ENCODE measurements at regions of chr13 and their contacts with region 1.

Region 1: DNA sequence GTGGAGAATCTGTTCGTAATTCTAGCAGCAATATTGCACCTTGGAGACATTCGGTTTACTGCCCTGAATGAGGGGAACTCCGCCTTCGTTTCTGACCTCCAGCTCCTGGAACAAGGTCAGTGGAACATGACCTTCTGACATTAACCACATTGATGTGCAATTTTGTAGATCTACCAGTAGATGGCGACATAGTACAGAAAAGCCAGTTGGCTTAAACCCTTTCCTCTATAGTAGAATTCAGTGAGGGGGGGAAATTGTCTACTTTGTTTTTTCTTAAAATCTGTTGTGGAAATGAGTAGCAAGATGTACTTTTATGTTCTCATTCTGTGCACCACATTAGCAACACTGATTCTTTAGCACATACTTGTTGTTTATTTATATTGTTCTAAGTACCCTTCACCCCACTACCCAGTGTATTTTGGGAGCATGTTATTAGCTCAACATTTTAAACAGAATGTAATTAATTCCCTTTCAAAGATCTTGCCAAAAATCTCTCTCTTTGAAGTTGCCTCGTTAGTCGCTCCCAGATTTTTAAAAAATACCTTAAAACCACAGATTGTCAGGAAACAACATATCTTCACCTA is 332.2 kb downstream of the MYO16 start:
- DNase-seq: peak; percentile 61
- ATAC-seq: peak; percentile 61
- H3K4me3 ChIP-seq: no peak overlapping the region
- H3K4me3 Mint-ChIP-seq: no peak overlapping the region
- H3K27ac ChIP-seq: no peak overlapping the region
- H3K27ac Mint-ChIP-seq: no peak overlapping the region
- H3K4me1 ChIP-seq: no peaks in the 10 kb centered on the region
- H3K4me1 Mint-ChIP-seq: no peaks in the 10 kb centered on the region
- H3K27me3 ChIP-seq: no peaks in the 10 kb centered on the region
- H3K27me3 Mint-ChIP-seq: peaks cover 2% of the 10 kb centered on the region
- CTCF ChIP-seq: peak; percentile 96

Region 2: GRCh38 chr13:108690726-108691125 is 270.9 kb before region 1 on chr13:
- CTCF ChIA-PET with region 1: no interaction called
- POLR2A ChIA-PET with region 1: no interaction called
- intact Hi-C with region 1: no loop called
- DNase-seq: no peak
- ATAC-seq: no peak
- H3K4me3 ChIP-seq: no peak overlapping the region
- H3K4me3 Mint-ChIP-seq: no peak overlapping the region
- H3K27ac ChIP-seq: no peak overlapping the region
- H3K27ac Mint-ChIP-seq: no peak overlapping the region
- H3K4me1 ChIP-seq: no peaks in the 10 kb centered on the region
- H3K4me1 Mint-ChIP-seq: no peaks in the 10 kb centered on the region
- H3K27me3 ChIP-seq: no peaks in the 10 kb centered on the region
- H3K27me3 Mint-ChIP-seq: no peaks in the 10 kb centered on the region
- CTCF ChIP-seq: no peak

Region 3: GRCh38 chr13:108769213-108770070 is 192.2 kb before region 1 on chr13:
- CTCF ChIA-PET with region 1: no interaction called
- POLR2A ChIA-PET with region 1: no interaction called
- intact Hi-C with region 1: no loop called
- DNase-seq: no peak
- ATAC-seq: no peak
- H3K4me3 ChIP-seq: no peak overlapping the region
- H3K4me3 Mint-ChIP-seq: no peak overlapping the region
- H3K27ac ChIP-seq: no peak overlapping the region
- H3K27ac Mint-ChIP-seq: no peak overlapping the region
- H3K4me1 ChIP-seq: no peaks in the 10 kb centered on the region
- H3K4me1 Mint-ChIP-seq: no peaks in the 10 kb centered on the region
- H3K27me3 ChIP-seq: no peaks in the 10 kb centered on the region
- H3K27me3 Mint-ChIP-seq: no peaks in the 10 kb centered on the region
- CTCF ChIP-seq: no peak

Region 4: DNA sequence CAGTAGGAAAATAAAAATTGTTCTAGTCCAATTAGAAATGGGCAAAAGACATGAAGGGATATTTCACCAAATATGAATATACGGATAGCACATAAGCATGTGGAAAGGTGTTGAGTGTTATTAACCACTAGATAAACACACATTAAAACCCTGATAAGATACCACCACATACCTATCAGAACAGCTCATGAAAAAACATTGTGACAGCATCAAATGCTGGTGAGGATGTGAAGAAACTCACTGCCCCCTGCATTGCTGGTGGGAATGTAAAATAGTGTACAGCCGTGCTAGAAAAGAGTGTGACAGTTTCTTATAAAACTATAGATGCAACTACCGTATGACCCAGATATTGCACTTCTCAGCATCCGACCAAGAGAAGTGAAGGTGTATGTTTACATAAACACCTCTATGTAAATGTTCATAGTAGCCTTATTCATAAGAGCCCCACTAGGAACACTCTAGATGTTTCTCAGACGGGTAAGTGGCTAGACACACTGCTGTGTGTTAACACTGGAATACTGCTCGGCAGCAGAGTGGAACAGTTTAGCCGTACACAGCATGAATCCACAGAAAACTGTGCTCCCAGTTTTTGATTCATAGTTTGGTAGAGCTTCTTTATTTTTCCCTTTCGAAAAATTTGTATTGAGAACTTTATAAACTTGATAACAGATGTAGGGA is 11.2 kb before region 1 on chr13:
- CTCF ChIA-PET with region 1: interaction called, 14 read pairs
- POLR2A ChIA-PET with region 1: no interaction called
- intact Hi-C with region 1: no loop called
- DNase-seq: no peak
- ATAC-seq: no peak
- H3K4me3 ChIP-seq: no peak overlapping the region
- H3K4me3 Mint-ChIP-seq: no peak overlapping the region
- H3K27ac ChIP-seq: no peak overlapping the region
- H3K27ac Mint-ChIP-seq: no peak overlapping the region
- H3K4me1 ChIP-seq: no peaks in the 10 kb centered on the region
- H3K4me1 Mint-ChIP-seq: no peaks in the 10 kb centered on the region
- H3K27me3 ChIP-seq: no peaks in the 10 kb centered on the region
- H3K27me3 Mint-ChIP-seq: peaks cover 7% of the 10 kb centered on the region
- CTCF ChIP-seq: no peak

Region 5: DNA sequence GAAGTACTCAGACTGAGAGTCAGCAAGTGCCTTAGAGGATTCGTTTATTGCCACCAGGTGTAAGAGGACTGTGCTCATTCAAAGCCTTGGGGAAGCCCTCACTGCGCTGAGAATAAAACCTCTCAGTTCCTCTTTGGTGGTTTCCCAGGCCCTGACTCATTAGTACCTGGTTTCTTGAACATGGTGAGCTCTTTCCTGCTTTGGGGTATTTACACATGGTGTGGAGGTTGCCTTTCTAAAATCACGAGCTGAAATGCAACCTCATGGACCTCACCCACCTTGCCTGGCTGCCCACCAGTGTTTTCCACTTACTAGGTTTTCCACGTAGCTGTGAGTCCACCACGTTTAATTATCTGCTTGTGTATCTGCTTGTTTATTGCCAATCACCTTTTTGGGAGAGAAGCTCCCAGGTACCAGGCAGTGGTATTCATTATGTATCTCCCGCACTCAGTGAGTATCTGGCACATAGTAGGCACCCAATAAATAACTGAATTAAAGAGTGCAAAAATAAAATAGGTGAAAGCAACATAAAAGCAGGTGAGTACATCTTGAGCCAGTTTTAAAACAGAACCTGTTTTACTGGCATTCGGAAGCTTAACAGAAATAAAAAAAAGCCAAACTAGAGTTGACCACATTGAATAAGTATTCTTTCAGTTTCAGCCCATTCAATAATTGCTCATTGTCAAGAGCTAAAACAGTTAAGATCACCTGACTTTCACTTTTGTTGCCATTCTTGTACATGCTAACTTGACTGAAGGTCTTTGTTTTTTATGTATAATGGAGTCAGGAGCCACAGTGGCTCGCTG is 200.8 kb after region 1 on chr13:
- CTCF ChIA-PET with region 1: no interaction called
- POLR2A ChIA-PET with region 1: no interaction called
- intact Hi-C with region 1: loop called (anchors 10 kb)
- DNase-seq: peak; percentile 86
- ATAC-seq: peak; percentile 93
- H3K4me3 ChIP-seq: no peak overlapping the region
- H3K4me3 Mint-ChIP-seq: peak overlapping the region; percentile 82
- H3K27ac ChIP-seq: peak overlapping the region in 1 of 2 donors; percentile 50
- H3K27ac Mint-ChIP-seq: peak overlapping the region; percentile 85
- H3K4me1 ChIP-seq: peaks cover 18 to 33% of the 10 kb centered on the region in 2 donors
- H3K4me1 Mint-ChIP-seq: peaks cover 37% of the 10 kb centered on the region
- H3K27me3 ChIP-seq: peaks cover 0 to 4% (median 2%) of the 10 kb centered on the region in 4 experiments
- H3K27me3 Mint-ChIP-seq: peaks cover 26% of the 10 kb centered on the region
- CTCF ChIP-seq: no peak

Region 6: DNA sequence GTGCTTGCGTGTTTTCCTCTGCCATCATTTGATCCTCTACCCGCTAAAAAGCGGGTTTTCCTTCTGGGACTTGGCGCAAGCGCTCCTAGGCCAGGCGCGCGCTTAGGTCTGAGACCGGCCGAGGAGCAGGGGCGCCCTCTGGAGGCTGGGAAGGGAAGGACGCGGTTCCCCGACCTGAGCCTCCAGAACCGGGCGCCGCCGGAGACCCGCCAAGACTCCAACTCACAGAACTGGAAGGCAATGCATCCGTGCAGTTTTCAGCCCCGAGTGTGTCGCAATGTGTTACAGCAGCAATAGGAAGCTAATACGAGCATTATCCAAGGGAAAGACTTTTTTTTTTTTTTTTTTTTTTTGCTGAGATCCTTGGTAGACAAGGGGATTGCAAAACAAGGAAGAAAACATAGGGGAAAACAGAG is 1154.4 kb after region 1 on chr13:
- CTCF ChIA-PET with region 1: interaction called, 10 read pairs
- POLR2A ChIA-PET with region 1: no interaction called
- intact Hi-C with region 1: no loop called
- DNase-seq: peak; percentile 38
- ATAC-seq: peak; percentile 39
- H3K4me3 ChIP-seq: no peak overlapping the region
- H3K4me3 Mint-ChIP-seq: no peak overlapping the region
- H3K27ac ChIP-seq: no peak overlapping the region
- H3K27ac Mint-ChIP-seq: no peak overlapping the region
- H3K4me1 ChIP-seq: no peaks in the 10 kb centered on the region
- H3K4me1 Mint-ChIP-seq: no peaks in the 10 kb centered on the region
- H3K27me3 ChIP-seq: peaks cover 0 to 12% (median 3%) of the 10 kb centered on the region in 4 experiments
- H3K27me3 Mint-ChIP-seq: peaks cover 17% of the 10 kb centered on the region
- CTCF ChIP-seq: peak; percentile 59

Region 7: DNA sequence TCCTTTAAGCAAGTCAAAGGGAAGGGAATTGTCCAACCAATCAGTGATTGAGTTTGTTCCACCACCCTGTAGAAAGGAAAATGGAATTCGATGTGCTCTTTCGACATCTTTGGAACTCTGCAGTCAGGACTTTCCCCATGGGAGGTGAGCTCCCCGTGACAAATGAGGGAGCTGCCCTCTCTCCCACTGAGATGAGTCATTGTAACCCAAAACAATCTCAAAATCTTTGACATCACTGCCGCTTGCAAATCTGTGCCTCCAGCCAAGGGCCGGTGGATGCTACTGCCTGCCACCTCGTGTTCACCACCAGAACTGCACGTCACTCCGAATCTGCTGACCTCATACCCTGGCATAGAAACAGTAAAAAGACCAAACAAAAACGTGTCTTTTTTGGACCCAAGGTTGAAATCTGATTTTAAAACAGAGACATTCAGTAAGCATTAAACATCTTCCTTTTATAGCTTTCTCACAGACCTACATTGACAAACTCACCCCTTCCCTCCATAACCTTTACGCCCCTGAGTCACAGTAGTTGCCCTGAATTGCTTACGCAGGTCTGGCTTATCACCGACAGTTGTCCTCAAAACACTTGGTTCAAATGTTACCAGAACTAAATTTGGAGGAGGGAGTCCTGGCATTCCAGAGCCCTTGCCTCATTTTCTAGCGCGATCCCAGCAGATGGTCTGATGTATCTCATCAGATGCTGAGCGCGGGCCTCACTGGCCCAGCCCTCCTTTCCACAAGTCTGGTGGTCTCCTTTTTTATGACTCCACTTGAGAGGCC is 1450.7 kb after region 1 on chr13:
- CTCF ChIA-PET with region 1: interaction called, 13 read pairs
- POLR2A ChIA-PET with region 1: no interaction called
- intact Hi-C with region 1: no loop called
- DNase-seq: peak; percentile 63
- ATAC-seq: peak; percentile 83
- H3K4me3 ChIP-seq: no peak overlapping the region
- H3K4me3 Mint-ChIP-seq: no peak overlapping the region
- H3K27ac ChIP-seq: no peak overlapping the region
- H3K27ac Mint-ChIP-seq: no peak overlapping the region
- H3K4me1 ChIP-seq: peaks cover 0 to 3% of the 10 kb centered on the region in 2 donors
- H3K4me1 Mint-ChIP-seq: peaks cover 4% of the 10 kb centered on the region
- H3K27me3 ChIP-seq: peaks cover 0 to 15% (median 6%) of the 10 kb centered on the region in 4 experiments
- H3K27me3 Mint-ChIP-seq: peaks cover 40% of the 10 kb centered on the region
- CTCF ChIP-seq: peak; percentile 84

Measured in B cell (primary cell).